BJ (cell line): ENCODE measurements at regions of chr1 and their contacts with region 1.

Region 1: GRCh38 chr1:44835738-44836675 is 7.0 kb downstream of the PTCH2 start:
- DNase-seq: no peak
- H3K4me3 ChIP-seq: no peak overlapping the region
- H3K27me3 ChIP-seq: no peaks in the 10 kb centered on the region
- CTCF ChIP-seq: peak; percentile 91

Region 2: GRCh38 chr1:44806025-44806703 is 29.8 kb before region 1 on chr1:
- CTCF ChIA-PET with region 1: no interaction called
- POLR2A ChIA-PET with region 1: no interaction called
- DNase-seq: no peak
- H3K4me3 ChIP-seq: no peak overlapping the region
- H3K27me3 ChIP-seq: no peaks in the 10 kb centered on the region
- CTCF ChIP-seq: no peak

Region 3: DNA sequence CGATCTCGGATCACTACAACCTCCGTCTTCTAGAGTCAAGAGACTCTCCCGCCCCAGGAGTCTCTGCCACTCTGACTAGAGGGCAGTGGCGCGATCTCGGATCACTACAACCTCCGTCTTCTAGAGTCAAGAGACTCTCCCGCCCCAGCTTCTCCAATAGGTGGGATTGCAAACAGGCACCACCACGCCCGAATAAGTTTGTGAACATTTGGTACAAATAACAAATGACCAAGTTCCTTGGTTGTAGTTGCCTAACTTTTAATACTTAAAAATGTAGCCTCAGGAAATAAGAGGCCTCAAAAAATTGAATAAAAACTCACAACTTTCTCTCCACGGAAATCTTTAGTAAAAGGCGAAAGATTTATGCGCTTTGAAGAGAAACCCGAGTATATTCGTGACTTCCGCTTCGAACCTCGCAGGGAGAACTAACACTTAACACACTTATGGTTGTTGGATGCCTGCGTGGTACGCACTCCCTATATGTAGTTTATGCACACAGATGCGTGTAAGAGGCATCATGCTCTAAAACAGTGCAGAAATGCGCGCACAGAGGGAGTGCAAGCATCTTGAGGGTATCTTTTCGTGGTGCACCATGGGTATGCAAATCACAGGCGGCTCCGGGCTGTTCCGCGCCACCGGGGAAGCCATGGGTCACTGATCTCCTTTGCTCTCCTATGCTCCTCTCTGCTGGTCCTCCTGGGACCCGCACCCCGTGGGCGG is 16.2 kb before region 1 on chr1:
- CTCF ChIA-PET with region 1: interaction called, 23 read pairs
- POLR2A ChIA-PET with region 1: no interaction called
- DNase-seq: peak; percentile 79
- H3K4me3 ChIP-seq: peak overlapping the region; percentile 38
- H3K27me3 ChIP-seq: no peaks in the 10 kb centered on the region
- CTCF ChIP-seq: no peak

Region 4: DNA sequence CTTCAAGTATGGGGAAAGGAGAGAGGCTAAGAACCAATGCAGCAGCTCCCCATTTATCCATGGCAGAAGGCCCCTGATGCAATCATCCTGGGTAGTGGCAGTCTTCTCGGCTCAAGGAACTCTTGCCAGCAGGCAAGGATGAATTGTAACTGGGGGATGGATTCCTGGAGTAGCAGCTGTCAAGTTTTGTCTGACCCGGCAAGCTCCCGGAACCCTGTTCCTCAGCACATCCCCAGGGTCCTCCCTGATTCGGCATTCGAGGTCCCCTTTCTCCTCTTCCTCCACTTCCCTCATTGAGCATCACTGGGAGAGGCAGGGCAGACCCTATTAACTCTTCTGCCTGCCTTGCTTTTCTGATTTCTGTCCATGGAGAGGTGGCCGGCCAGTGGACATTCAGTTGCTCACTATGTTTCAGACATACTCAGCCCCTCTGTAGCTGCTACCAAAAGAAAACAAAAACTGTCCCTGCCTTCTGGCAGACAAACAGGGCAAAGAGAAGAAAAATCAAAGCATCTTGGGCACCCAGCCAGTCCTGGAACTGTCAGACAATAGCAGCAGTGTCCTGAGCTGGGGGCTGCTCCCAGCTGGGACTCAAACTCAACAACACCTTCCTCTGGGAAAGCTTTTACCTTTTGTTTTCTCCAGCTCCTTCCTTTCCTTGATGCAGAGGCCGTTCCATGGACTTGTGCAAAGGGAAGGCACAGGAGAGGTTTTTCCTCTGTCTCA is 12.6 kb after region 1 on chr1:
- CTCF ChIA-PET with region 1: interaction called, 10 read pairs
- POLR2A ChIA-PET with region 1: no interaction called
- DNase-seq: no peak
- H3K4me3 ChIP-seq: no peak overlapping the region
- H3K27me3 ChIP-seq: no peaks in the 10 kb centered on the region
- CTCF ChIP-seq: no peak